ENCODE measurements at regions of chr9 and their contacts with region 1.

Region 1: DNA sequence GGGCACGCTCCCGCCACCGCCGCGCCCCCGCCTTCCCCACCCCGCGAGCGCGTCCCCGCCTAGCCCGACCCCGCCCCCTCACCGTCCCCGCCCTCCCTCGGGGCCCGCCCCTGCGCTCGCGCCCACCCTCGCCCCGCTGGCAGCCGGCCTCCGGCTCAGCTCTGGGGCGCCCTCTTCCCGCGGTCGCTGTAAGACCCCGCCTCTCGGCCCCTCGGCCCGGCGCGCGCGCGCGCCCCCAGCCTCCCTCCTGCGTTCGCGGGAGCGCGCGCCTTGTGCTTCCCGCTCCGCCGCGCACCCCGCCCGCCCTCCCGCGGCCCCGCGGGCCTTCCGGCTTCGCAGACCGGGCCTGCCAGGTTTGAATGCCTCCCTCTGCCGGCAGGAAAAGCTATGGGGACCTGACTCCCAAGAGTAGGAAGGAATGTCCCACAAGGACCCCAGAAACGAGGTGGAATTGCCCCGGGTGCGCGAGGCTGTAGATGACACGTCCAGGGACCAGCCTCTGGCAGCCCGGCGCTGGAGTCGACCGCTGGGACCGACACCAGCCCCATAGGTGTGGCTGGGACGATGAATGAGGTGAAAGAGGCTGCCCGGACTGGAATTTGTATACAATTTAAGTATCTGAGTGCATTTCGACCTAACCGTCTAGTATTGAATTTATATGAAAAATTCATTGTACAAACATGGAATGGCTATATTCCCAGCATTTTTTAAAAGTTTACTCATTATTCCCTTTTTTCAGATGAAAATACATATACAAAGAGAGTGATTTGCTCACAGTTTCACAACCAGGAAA is 416 bp upstream of the PTBP3 start:
- DNase-seq: peak; percentile 88
- H3K4me3 Mint-ChIP-seq: peak overlapping the region; percentile 97
- H3K27ac Mint-ChIP-seq: peak overlapping the region; percentile 94
- H3K4me1 Mint-ChIP-seq: peaks cover 31% of the 10 kb centered on the region
- H3K27me3 Mint-ChIP-seq: peaks cover 2% of the 10 kb centered on the region

Region 2: GRCh38 chr9:111483862-111484571 is 849.8 kb before region 1 on chr9 and contains the start of gene ECPAS:
- intact Hi-C with region 1: loop called (anchors 10 kb)
- DNase-seq: peak; percentile 65
- H3K4me3 Mint-ChIP-seq: peak within 1 kb of the TSS; percentile 87
- H3K27ac Mint-ChIP-seq: peak within 1 kb of the TSS; percentile 86
- H3K4me1 Mint-ChIP-seq: peaks cover 34% of the 10 kb centered on the region
- H3K27me3 Mint-ChIP-seq: peaks cover 3% of the 10 kb centered on the region
- total RNA-seq, gene ECPAS: 98.9 and 110 TPM in 2 replicates

Region 3: DNA sequence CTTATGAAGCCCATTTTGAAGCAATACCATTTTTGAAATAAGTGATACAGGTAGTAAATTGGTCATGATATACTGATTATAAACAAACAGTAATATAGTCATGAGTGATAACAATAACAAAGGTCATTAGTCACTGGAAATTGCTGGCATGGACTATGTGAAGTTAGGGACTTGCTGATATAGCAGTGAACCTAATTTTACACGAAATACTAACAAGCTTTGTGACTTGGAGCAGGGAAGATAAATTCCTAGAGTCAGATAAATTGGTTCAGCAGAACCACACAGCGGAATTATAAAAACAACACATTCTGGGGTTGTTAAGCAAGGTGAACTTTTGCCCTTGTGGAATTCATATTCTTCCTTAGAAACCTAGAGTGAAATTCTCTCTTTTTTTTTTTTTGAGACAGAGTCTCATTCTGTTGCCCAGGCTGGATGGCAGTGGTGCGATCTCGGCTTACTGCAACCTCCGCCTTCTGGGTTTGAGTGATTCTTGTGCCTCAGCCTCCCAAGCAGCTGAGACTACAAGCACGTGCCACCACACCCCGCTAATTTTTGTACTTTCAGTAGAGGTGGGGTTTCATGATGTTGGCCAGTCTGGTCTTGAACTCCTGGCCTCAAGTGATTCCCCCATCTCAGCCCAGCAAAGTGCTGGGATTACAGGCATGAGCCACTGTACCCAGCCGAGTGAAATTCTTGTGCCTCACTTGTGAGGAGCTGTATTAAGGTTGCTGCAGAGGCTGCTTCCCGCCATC is 431.3 kb before region 1 on chr9:
- intact Hi-C with region 1: no loop called
- DNase-seq: no peak
- H3K4me3 Mint-ChIP-seq: no peak overlapping the region
- H3K27ac Mint-ChIP-seq: no peak overlapping the region
- H3K4me1 Mint-ChIP-seq: peaks cover 5% of the 10 kb centered on the region
- H3K27me3 Mint-ChIP-seq: no peaks in the 10 kb centered on the region

Region 4: DNA sequence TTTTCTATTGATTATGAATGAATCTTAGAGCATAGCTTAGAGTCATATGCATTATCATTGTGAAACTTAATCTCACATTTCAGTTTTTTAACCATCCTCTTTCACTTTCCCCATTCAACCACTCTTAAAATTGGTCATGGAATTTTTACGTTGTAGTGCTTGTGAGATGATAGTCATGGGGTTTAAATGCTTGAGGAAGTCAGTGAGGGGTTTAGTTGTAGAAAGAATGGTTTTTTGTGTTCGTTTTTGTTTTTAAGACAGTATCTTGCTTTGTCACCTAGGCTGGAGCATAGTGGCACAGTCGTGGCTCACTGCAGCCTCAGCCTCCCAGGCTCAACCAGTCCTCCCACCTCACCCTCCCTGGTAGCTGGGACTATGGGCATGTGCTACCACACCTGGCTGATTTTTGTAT is 417.6 kb before region 1 on chr9:
- intact Hi-C with region 1: loop called (anchors 1 kb)
- DNase-seq: no peak
- H3K4me3 Mint-ChIP-seq: peak overlapping the region; percentile 2
- H3K27ac Mint-ChIP-seq: peak overlapping the region; percentile 74
- H3K4me1 Mint-ChIP-seq: peaks cover 54% of the 10 kb centered on the region
- H3K27me3 Mint-ChIP-seq: peaks cover 4% of the 10 kb centered on the region

Region 5: DNA sequence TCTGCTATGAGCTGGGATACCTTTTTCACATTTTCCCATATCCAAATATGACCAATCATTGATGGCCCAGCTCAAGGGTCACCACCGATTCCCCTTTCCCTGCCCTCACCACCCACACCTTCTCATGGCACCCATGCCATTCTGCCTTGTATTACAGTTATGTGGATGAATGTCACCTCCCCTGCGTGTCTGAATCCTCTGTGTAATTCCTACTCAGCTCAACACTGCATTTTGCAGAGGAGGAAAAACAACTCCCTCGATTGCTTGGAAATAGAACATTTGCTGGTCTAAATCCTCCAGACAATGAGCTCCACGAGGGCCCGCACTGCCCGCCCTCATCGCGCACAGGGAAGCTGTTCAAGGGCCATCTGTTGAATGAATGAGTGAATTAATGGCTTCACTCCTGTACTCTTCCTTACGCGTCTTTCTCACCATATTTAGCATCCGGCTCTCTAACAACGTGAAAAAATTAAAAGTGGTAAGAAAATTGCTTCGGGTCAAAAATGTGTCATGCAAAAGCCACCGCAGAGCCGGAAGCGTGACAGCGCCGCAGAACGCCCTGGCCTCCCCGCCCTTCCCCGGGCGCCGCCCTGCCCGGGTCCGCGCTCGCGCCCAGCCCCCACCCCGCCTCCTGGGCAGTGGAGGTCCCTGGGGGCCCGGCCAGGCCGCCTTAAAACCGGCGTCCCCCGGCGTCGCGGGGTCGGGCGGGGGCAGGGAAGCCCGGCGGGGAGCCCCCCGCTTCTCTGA is 159.4 kb before region 1 on chr9:
- intact Hi-C with region 1: loop called (anchors 1 kb)
- DNase-seq: peak; percentile 73
- H3K4me3 Mint-ChIP-seq: peak overlapping the region; percentile 88
- H3K27ac Mint-ChIP-seq: peak overlapping the region; percentile 93
- H3K4me1 Mint-ChIP-seq: peaks cover 74% of the 10 kb centered on the region
- H3K27me3 Mint-ChIP-seq: peaks cover 1% of the 10 kb centered on the region

Region 6: GRCh38 chr9:112241516-112241915 is 92.3 kb before region 1 on chr9:
- intact Hi-C with region 1: no loop called
- DNase-seq: no peak
- H3K4me3 Mint-ChIP-seq: no peak overlapping the region
- H3K27ac Mint-ChIP-seq: no peak overlapping the region
- H3K4me1 Mint-ChIP-seq: peaks cover 18% of the 10 kb centered on the region
- H3K27me3 Mint-ChIP-seq: no peaks in the 10 kb centered on the region

Region 7: DNA sequence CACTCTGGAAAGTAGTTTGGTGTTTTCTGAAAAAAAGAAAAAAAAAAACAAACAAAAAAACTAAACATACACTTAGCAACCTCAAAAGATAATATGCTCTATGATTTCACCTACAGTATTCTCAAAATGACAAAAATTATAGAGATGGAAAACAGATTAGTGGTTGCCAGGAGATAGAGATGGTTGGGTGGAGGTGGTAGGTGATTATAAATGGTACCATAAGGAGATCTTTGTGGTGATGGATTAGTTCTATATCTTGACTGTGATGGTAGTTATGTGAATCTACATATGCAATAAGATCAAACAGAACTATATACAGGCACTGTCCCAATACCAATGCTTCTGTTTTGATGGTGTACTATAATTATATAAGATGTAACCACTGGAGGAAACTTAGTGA is 32.4 kb before region 1 on chr9:
- intact Hi-C with region 1: loop called (anchors 1 kb)
- DNase-seq: no peak
- H3K4me3 Mint-ChIP-seq: no peak overlapping the region
- H3K27ac Mint-ChIP-seq: peak overlapping the region; percentile 50
- H3K4me1 Mint-ChIP-seq: peaks cover 38% of the 10 kb centered on the region
- H3K27me3 Mint-ChIP-seq: no peaks in the 10 kb centered on the region

Region 8: DNA sequence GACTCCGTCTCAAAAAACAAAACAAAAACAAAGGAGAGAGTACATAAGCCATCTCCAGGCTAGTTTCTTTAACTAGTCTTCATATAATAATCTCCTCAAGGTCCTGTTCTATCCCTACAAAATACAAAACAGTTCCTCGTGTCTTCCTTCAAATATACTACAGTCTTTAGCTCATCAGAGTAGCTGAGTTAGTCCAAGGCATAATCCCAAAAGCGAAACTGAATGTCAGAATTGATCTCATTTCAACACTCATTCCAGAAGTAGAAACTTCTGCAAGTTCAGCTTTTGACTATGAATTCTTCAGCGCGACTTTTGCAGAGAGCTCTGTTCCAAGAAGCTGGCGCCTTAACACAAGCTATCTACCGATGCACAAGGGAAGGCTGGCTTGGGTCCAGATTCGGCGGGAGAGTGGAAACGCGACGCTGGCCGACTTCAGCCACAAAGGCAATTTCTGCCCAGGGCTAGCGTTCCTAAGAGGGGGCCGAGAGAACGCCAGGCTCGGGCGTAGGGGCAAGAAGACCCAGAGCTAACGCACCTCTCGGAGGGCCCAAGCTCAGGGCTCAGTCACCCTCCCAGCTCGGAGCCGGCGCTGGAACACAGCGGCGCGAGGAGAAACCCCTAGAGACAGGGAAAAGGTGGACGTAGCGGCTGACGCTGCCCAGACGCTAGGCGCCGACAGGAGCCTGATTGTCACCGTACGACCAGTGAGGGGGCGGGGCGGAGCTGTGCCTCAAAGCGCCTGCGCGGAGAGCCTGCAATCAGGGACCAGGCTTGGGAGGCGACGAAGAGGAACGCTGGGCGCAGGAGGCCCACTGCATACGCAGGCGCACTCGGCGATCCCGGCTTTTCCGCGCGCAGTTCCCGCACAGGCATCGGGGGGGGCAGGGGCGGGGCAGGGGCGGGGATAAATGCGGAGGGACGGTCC is 45.6 kb after region 1 on chr9:
- intact Hi-C with region 1: loop called (anchors 1 kb)
- DNase-seq: peak; percentile 97
- H3K4me3 Mint-ChIP-seq: peak overlapping the region; percentile 98
- H3K27ac Mint-ChIP-seq: peak overlapping the region; percentile 99
- H3K4me1 Mint-ChIP-seq: peaks cover 52% of the 10 kb centered on the region
- H3K27me3 Mint-ChIP-seq: no peaks in the 10 kb centered on the region

Region 9: DNA sequence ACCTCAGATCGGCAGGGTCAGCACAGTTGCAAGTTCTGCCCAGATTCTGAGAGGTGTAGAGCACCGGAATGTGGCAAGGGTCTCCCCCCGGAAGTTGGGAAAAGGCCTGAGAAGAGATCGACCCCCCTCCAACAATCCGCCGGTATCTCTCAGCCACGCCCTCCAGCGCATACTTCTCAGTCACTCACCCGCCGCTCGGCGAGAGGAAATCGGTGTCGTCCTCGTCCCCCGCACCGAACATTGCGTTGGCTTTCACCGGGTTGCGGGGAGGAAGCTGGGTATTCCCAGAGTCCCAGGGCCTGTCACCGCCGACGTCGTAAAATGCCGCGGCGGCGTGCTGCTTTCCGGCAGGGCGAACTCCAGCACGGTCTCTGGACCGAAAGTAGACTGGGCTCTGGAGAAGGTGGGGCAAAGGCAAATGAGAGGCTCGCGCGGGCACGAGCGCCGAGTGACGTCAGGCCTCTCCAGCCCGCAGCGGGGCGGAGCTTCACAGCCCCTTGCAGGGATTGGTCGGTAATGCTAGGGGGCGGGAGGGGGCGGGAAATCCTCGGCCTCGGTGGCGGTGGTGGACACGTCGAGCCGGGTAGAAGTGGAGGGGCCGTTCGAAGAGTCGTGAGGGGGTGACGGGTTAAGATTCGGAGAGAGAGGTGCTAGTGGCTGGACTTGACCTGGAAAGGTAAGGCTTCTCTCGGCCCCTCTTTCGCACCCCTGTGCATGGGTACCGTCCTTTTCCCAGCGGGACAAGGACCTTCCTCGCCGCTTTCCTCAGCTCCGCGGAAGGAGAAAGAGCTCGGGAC is 887.4 kb after region 1 on chr9 and contains the starts of genes FKBP15 and SLC31A1:
- intact Hi-C with region 1: loop called (anchors 5 kb)
- DNase-seq: peak; percentile 96
- H3K4me3 Mint-ChIP-seq: peak within 1 kb of the TSS; percentile 98
- H3K27ac Mint-ChIP-seq: peak within 1 kb of the TSS; percentile 97
- H3K4me1 Mint-ChIP-seq: peaks cover 64% of the 10 kb centered on the region
- H3K27me3 Mint-ChIP-seq: no peaks in the 10 kb centered on the region
- total RNA-seq, gene FKBP15: 34.9 and 35.8 TPM in 2 replicates
- total RNA-seq, gene SLC31A1: 16.1 and 17.6 TPM in 2 replicates